ENCODE measurements at regions of chr7 and their contacts with region 1.

Region 1: GRCh38 chr7:135509903-135510602 is at the start of gene CNOT4:
- DNase-seq: peak; percentile 97
- H3K4me3 Mint-ChIP-seq: no peak within 1 kb of the TSS
- H3K27ac Mint-ChIP-seq: no peak within 1 kb of the TSS
- H3K4me1 Mint-ChIP-seq: peaks cover 13% of the 10 kb centered on the region
- H3K27me3 Mint-ChIP-seq: no peaks in the 10 kb centered on the region
- total RNA-seq, gene CNOT4: 21.1 and 26.3 TPM in 2 replicates

Region 2: DNA sequence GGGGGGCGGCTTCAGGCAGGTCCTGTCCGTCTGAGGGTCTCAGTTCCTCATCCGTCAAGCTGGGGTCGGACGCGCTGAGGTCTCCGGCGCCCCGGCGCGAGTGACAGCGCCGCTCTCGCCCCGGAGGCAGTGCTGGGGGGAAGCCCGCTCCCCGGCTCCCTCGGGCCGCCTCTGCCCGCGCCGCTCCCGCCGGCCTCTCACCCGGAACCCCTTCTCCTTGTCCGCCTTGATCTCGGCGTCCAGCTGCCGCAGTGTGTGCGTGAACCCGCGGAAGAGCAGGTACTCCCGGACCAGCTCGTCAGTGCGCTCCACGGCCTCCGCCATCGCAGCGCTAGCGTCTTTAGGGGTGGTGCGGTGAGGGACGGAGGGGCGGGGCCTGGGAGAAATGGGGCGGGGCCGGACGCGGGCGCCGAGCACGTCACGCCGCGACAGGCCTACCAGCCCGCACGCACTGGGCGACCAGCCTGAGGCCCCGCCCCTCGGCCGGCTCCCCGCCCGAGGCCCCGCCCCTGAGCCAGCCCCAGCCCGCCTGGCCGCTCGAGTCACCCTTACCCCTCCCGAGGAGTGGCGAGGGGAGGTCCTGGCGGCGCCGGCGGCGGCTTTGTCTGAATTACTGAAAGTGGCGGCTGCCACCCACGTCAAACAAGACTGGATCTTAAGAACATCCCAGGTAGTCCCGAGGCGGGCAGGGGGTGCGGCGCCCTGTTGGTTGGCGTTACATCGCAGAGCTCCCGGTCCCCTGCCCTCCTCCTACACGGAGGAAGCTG is 298.7 kb before region 1 on chr7 and contains the start of gene WDR91:
- intact Hi-C with region 1: loop called (anchors 1 kb)
- DNase-seq: peak; percentile 96
- H3K4me3 Mint-ChIP-seq: peak within 1 kb of the TSS; percentile 95
- H3K27ac Mint-ChIP-seq: peak within 1 kb of the TSS; percentile 98
- H3K4me1 Mint-ChIP-seq: peaks cover 29% of the 10 kb centered on the region
- H3K27me3 Mint-ChIP-seq: no peaks in the 10 kb centered on the region
- total RNA-seq, gene WDR91: 25.8 and 26.6 TPM in 2 replicates

Region 3: DNA sequence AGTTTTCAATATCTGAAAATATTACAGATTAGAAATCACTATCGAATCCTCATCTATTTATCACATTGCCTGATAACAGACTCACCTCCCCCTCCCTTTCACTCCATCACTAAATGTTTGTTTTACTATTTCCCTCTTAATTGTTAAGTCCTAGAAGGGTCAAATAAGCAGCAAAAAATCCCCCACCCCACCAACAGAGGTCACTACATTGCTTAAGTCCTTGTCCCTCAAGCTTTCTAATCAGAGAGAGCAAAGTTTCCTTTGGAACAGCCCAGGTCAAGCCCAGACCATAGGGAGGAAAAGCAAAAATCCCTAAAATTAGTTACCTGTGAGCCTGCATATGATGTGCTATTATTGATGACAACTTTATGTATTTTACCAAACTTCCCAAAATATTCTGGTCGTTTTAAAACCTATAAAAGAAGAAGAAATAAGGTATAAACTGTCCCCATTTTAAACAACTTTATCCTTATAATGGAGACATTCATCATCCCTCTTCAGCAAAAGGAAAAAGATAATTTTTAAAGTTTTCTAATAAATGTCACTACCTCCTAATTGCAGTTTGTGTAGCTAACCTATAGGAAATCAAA is 95.1 kb before region 1 on chr7:
- intact Hi-C with region 1: loop called (anchors 5 kb)
- DNase-seq: peak; percentile 69
- H3K4me3 Mint-ChIP-seq: no peak overlapping the region
- H3K27ac Mint-ChIP-seq: no peak overlapping the region
- H3K4me1 Mint-ChIP-seq: peaks cover 5% of the 10 kb centered on the region
- H3K27me3 Mint-ChIP-seq: no peaks in the 10 kb centered on the region

Region 4: GRCh38 chr7:135645296-135645904 is 135.3 kb after region 1 on chr7:
- intact Hi-C with region 1: loop called (anchors 2 kb)
- DNase-seq: peak; percentile 76
- H3K4me3 Mint-ChIP-seq: no peak overlapping the region
- H3K27ac Mint-ChIP-seq: no peak overlapping the region
- H3K4me1 Mint-ChIP-seq: no peaks in the 10 kb centered on the region
- H3K27me3 Mint-ChIP-seq: no peaks in the 10 kb centered on the region

Region 5: GRCh38 chr7:135977007-135977741 is 467.1 kb after region 1 on chr7 and contains the start of gene MTPN:
- intact Hi-C with region 1: loop called (anchors 1 kb)
- DNase-seq: peak; percentile 99
- H3K4me3 Mint-ChIP-seq: peak within 1 kb of the TSS; percentile 95
- H3K27ac Mint-ChIP-seq: peak within 1 kb of the TSS; percentile 86
- H3K4me1 Mint-ChIP-seq: peaks cover 61% of the 10 kb centered on the region
- H3K27me3 Mint-ChIP-seq: no peaks in the 10 kb centered on the region
- total RNA-seq, gene MTPN: 121 and 126 TPM in 2 replicates